Endothelial cell of umbilical vein (primary cell): ENCODE measurements at regions of chr1 and their contacts with region 1.

Region 1: DNA sequence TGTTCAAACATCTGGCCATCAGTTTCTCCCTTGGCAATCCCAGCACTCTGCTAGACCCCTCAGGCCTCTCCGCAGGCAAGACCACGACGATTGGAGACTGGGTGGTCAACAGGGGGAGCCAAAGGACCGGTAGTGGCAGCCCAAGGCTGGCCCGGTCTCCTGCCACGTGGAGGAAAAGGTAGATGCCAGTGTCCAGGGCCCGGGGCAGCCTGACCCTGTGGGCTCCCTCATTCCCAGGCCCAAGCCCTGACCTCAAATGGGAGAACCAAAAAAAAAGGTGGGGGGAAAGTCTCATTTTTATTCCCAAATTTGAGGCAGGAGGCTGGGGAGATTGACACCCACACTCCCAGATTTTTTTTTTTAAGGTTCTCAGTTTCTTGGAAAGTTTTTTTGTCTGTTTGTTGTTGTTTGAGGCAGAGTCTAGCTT is 24.8 kb downstream of the S100A6 start:
- DNase-seq: peak; percentile 71
- H3K4me3 ChIP-seq: no peak overlapping the region
- H3K27ac ChIP-seq: no peak overlapping the region
- H3K4me1 ChIP-seq: no peaks in the 10 kb centered on the region
- H3K27me3 ChIP-seq: no peaks in the 10 kb centered on the region
- CTCF ChIP-seq: peak; percentile 94
- POLR2A ChIP-seq: no peak

Region 2: DNA sequence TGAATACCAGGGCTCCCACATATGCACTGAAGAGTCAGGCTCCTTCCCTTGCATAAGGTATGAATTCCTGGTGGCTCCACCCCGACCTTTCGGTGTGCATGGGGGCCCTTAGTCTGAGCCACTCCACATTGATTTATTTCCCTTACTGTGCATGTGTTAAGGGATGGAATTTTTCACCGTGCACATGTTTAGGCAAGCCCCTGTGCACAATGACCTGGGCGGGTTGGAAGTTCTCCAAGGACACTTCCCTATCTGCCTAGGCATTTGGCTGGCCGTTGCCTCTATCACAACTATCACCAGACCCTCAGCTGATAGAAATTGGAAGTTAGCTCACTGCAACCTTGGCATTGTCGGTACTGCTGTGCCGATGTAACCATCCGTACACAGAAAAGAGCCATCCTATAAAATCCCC is 15.1 kb after region 1 on chr1:
- CTCF ChIA-PET with region 1: interaction called, 63 read pairs
- POLR2A ChIA-PET with region 1: no interaction called
- dilution Hi-C with region 1: no loop called
- intact Hi-C with region 1: no loop called
- DNase-seq: no peak
- H3K4me3 ChIP-seq: no peak overlapping the region
- H3K27ac ChIP-seq: no peak overlapping the region
- H3K4me1 ChIP-seq: peaks cover 3% of the 10 kb centered on the region
- H3K27me3 ChIP-seq: no peaks in the 10 kb centered on the region
- CTCF ChIP-seq: no peak
- POLR2A ChIP-seq: no peak

Region 3: DNA sequence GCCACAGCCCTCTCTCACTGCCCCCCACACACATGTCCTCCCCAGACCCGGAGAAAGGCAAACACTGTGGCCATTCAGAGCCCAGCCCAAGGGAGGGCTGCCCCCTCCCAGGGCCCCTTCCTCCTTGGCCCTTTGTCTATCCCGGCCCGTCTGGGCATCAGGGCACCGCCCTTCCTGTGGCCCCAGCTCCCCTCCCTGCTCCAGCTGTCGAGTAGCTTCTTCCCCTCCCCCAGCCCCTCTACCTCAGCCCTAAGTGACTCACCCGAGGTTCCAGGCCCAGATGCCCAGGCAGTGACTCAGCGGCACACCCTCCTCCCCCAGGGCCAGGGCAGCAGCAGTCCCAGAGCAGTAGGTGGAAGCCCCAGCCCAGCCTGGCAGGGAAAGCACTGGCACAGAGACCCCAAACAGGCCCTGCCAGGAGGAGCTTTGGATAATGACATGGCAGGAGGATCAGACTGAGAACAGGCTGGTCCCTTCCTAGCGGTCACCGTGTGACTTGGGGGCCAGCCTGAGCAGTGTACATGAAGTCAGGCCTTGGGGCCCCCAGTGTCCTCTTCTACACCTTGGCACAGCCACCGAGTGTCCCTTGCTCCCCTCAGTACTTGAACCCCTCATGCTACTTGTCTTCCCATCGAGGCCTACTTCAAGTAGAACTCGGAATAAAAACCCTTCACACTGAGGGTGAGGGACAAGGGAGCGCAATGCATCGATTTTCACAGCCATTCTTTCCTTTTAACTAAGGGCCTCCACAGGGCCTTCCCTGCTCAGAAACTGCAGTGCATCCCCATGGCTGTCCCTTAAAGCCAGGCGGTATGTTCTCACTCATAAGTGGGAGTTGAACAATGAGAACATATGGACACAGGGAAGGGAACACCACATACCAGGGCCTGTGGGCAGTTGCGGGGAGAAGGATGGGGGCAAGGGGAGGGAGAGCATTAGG is 55.7 kb after region 1 on chr1:
- CTCF ChIA-PET with region 1: interaction called, 167 read pairs
- POLR2A ChIA-PET with region 1: no interaction called
- dilution Hi-C with region 1: no loop called
- intact Hi-C with region 1: loop called (anchors 1 kb)
- DNase-seq: peak; percentile 96
- H3K4me3 ChIP-seq: no peak overlapping the region
- H3K27ac ChIP-seq: peak overlapping the region; percentile 99
- H3K4me1 ChIP-seq: peaks cover 34% of the 10 kb centered on the region
- H3K27me3 ChIP-seq: no peaks in the 10 kb centered on the region
- CTCF ChIP-seq: no peak
- POLR2A ChIP-seq: no peak

Region 4: DNA sequence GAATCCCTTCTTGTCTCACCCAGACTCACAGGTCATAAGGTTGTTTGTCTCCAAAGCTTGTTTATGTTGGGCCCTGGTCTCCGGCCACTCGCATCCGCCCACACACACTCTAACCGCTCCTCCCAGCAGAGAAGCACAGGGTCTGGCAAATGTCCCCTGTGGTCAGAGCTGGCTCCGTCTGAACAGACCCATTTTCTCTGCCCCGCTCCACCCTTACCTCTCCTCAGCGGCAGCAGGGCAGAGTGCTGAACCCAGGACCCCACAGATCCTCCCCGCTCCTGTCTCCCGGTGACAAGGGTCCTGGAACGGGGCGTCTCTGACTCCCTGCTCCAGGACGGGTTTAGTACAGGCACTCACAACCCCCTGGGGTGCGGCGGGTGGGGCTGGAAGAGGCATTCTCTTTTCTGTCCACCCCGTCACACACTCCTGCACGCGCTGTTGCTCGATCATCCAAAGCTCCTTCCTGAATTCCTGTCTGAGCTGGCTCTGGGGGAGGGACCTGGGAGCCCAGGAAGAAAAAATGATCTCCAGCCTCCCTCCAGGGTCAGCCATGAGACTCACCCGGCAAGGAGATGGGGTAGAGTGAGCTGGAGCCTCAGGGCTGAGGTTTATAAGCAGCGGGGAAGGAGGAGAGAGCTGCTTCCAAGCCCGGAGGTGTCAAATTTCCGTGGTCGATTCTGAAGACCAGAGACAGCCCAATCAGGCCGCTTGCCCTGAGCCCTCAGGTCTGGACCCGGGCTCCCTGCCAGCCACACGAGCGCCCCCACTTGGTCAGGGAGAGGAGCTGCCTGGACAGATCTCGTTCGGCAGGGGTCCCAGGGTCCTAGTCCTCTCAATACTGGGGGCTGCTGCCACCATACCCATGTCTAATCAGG is 116.2 kb after region 1 on chr1 and contains the start of gene S100A13:
- CTCF ChIA-PET with region 1: interaction called, 33 read pairs
- POLR2A ChIA-PET with region 1: no interaction called
- dilution Hi-C with region 1: no loop called
- intact Hi-C with region 1: loop called (anchors 1 kb)
- DNase-seq: peak; percentile 90
- H3K4me3 ChIP-seq: peak within 1 kb of the TSS; percentile 57 to 74 (median 62)
- H3K27ac ChIP-seq: peak within 1 kb of the TSS; percentile 81
- H3K4me1 ChIP-seq: peaks cover 14% of the 10 kb centered on the region
- H3K27me3 ChIP-seq: no peaks in the 10 kb centered on the region
- CTCF ChIP-seq: peak; percentile 93
- POLR2A ChIP-seq: peak; percentile 98
- total RNA-seq, gene S100A13: 155 and 255 TPM in 2 replicates

Region 5: GRCh38 chr1:153658400-153659174 is 147.6 kb after region 1 on chr1 and contains the start of gene SNAPIN:
- CTCF ChIA-PET with region 1: interaction called, 4 read pairs
- POLR2A ChIA-PET with region 1: no interaction called
- dilution Hi-C with region 1: no loop called
- intact Hi-C with region 1: loop called (anchors 1 kb)
- DNase-seq: peak; percentile 83
- H3K4me3 ChIP-seq: peak within 1 kb of the TSS; percentile 79 to 91 (median 83)
- H3K27ac ChIP-seq: peak within 1 kb of the TSS; percentile 64
- H3K4me1 ChIP-seq: peaks cover 7% of the 10 kb centered on the region
- H3K27me3 ChIP-seq: no peaks in the 10 kb centered on the region
- CTCF ChIP-seq: peak in 1 of 2 donors; percentile 21
- POLR2A ChIP-seq: peak; percentile 82
- total RNA-seq, gene SNAPIN: 36.5 and 36.8 TPM in 2 replicates

Region 6: DNA sequence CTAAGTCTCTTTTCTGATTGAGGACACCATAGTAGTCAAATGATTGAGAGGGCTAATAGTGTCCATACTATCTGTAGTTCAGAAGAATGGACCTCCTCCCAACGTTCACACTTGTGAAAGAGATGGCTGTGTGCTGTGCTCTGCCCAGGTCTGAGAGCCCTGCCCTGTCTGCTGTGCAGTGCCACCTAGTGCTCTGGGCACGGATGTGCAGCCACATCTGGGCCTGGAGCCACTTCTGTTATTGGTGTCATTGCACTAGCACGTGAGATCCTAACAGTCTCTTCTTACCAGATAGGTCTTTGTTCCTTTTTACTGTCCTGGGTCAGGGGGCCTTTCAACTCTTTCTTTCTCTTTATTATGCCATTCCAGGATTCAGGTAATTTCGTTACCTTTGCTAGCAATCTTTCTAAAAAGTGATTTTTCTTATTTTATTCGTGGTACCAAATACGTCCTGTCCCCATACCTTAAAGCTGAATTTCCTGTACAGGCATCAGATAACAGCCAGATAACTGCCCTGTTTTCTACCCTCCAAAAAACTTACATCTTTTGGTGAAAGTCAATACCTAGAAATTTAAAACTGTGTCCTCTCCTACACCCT is 238.5 kb after region 1 on chr1:
- CTCF ChIA-PET with region 1: interaction called, 3 read pairs
- POLR2A ChIA-PET with region 1: no interaction called
- dilution Hi-C with region 1: no loop called
- intact Hi-C with region 1: loop called (anchors 1 kb)
- DNase-seq: peak; percentile 88
- H3K4me3 ChIP-seq: no peak overlapping the region
- H3K27ac ChIP-seq: peak overlapping the region; percentile 36
- H3K4me1 ChIP-seq: peaks cover 37% of the 10 kb centered on the region
- H3K27me3 ChIP-seq: no peaks in the 10 kb centered on the region
- CTCF ChIP-seq: peak; percentile 94 to 96
- POLR2A ChIP-seq: no peak

Region 7: DNA sequence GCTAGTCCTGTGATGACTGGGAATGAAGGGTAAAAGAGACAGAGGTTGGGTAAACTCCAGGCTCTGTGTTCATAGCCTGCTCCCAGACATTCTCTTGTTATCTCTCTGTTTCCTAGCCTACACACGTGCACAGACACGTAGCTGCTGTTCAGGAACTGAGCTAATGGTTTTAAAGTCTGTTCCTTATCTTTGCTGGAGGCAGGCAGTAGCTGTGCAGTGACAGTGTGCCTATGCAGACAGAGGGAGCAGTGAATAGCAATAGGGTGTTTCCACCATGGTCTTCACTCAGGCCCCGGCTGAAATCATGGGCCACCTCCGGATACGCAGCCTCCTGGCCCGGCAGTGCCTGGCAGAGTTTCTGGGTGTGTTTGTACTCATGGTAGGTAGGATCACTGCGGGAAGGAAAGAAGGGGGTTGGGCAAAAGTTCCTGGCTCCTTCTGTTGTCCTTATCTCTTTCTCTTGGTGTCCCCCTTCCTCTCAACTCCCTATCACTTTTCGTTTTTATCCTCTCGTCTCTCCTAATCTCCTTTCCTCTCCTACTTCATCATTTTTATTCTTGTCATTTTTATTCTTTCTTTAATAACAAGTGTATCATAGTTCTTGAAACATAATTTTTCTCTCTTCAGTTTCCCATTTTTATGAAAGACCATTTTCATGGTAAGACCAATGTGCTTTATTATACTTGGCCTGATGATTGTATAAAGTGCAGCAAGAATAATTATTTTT is 810.0 kb after region 1 on chr1 and contains the start of gene AQP10:
- CTCF ChIA-PET with region 1: no interaction called
- POLR2A ChIA-PET with region 1: no interaction called
- dilution Hi-C with region 1: no loop called
- intact Hi-C with region 1: no loop called
- DNase-seq: peak; percentile 51
- H3K4me3 ChIP-seq: no peak within 1 kb of the TSS
- H3K27ac ChIP-seq: no peak within 1 kb of the TSS
- H3K4me1 ChIP-seq: no peaks in the 10 kb centered on the region
- H3K27me3 ChIP-seq: peaks cover 0 to 8% of the 10 kb centered on the region in 2 experiments
- CTCF ChIP-seq: no peak
- POLR2A ChIP-seq: no peak
- total RNA-seq, gene AQP10: not detected in 2 replicates